ENCODE measurements at regions of chr5 and their contacts with region 1.

Region 1: GRCh38 chr5:172984243-172984953 is 827 bp downstream of the ATP6V0E1 start:
- DNase-seq: peak; percentile 55 to 89 (median 79)
- ATAC-seq: peak; percentile 81 to 86
- H3K4me3 Mint-ChIP-seq: peak overlapping the region; percentile 94 to 99 (median 97)
- H3K27ac Mint-ChIP-seq: peak overlapping the region; percentile 92 to 99 (median 99)
- H3K4me1 Mint-ChIP-seq: peaks cover 9 to 61% (median 39%) of the 10 kb centered on the region in 4 donors
- H3K27me3 Mint-ChIP-seq: no peaks in the 10 kb centered on the region

Region 2: GRCh38 chr5:172958331-172959046 is 25.9 kb before region 1 on chr5:
- POLR2A ChIA-PET with region 1: interaction called, 24 read pairs
- DNase-seq: peak in 9 of 10 donors; percentile 36 to 76 (median 47)
- ATAC-seq: peak; percentile 63 to 64
- H3K4me3 Mint-ChIP-seq: peak overlapping the region; percentile 92 to 98 (median 96)
- H3K27ac Mint-ChIP-seq: peak overlapping the region; percentile 96 to 99 (median 98)
- H3K4me1 Mint-ChIP-seq: peaks cover 29 to 56% (median 37%) of the 10 kb centered on the region in 4 donors
- H3K27me3 Mint-ChIP-seq: no peaks in the 10 kb centered on the region

Region 3: GRCh38 chr5:173035904-173036707 is 51.7 kb after region 1 on chr5:
- POLR2A ChIA-PET with region 1: interaction called, 22 read pairs
- DNase-seq: no peak
- ATAC-seq: no peak
- H3K4me3 Mint-ChIP-seq: peak overlapping the region; percentile 72 to 89 (median 84)
- H3K27ac Mint-ChIP-seq: peak overlapping the region; percentile 66 to 100 (median 96)
- H3K4me1 Mint-ChIP-seq: peaks cover 30 to 73% (median 60%) of the 10 kb centered on the region in 4 donors
- H3K27me3 Mint-ChIP-seq: no peaks in the 10 kb centered on the region

Region 4: DNA sequence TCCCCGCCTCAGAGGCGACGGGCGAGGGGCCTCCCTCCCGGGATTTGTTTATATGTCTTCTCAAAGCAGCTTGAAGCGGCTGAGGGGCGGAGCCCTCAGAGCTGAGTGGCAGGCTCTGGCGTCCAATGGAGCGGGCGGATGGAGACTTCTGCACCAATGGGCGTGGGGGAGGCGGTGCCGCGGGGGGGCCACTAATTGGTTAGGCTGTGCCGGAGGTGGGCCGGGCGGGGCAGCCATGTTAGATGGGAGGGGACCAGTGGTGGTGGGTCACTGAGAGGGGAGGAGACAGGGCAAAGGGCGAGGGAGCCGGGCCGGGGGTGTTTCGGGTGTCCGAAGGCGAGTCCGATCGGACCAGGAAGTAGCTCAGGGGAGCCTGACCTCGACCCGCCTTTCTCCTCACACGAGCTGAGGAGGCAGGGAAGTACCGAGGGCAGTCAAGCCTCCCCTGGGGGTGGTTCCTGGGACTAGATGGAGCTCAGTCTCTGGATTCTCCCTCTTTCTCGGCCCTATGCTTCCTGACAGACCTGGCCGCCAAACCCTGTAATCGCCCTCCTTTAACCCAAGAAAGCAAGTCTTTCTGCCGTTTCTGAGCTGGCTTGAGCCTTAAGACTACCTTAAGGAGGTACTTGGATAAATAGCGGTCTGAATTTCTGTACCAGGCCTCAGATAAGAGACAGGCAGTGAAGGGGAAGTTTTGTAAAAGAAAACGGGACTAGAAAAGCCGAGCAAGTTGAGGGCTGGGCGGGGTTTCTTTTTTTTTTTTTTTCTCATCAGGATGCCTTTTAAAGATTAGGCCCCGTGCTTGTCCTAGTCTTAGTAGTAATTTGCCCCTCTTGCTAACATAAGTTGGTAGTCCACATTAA is 72.9 kb after region 1 on chr5:
- POLR2A ChIA-PET with region 1: interaction called, 64 read pairs
- DNase-seq: peak; percentile 97 to 99 (median 98)
- ATAC-seq: peak; percentile 81 to 83
- H3K4me3 Mint-ChIP-seq: peak overlapping the region; percentile 91 to 97 (median 94)
- H3K27ac Mint-ChIP-seq: peak overlapping the region; percentile 83 to 98 (median 96)
- H3K4me1 Mint-ChIP-seq: peaks cover 18 to 60% (median 47%) of the 10 kb centered on the region in 4 donors
- H3K27me3 Mint-ChIP-seq: no peaks in the 10 kb centered on the region

Region 5: GRCh38 chr5:173144200-173145176 is 160.1 kb after region 1 on chr5 and contains the start of gene BNIP1:
- POLR2A ChIA-PET with region 1: interaction called, 22 read pairs
- DNase-seq: peak; percentile 93 to 100 (median 96)
- ATAC-seq: peak; percentile 91 to 92
- H3K4me3 Mint-ChIP-seq: peak within 1 kb of the TSS; percentile 95 to 100 (median 98)
- H3K27ac Mint-ChIP-seq: peak within 1 kb of the TSS; percentile 95 to 100 (median 99)
- H3K4me1 Mint-ChIP-seq: peaks cover 7 to 22% (median 13%) of the 10 kb centered on the region in 4 donors
- H3K27me3 Mint-ChIP-seq: peaks cover 0 to 1% (median 0%) of the 10 kb centered on the region in 5 donors
- polyA plus RNA-seq, gene BNIP1: 11.0 to 19.3 (median 15.5) TPM

Measured in naive thymus-derived CD8-positive, alpha-beta T cell (primary cell).